H1 (cell line): ENCODE measurements at regions of chr20 and their contacts with region 1.

Region 1: GRCh38 chr20:4613718-4614620 is 107.7 kb upstream of the PRND start:
- DNase-seq: peak in 1 of 2 experiments; percentile 68
- H3K4me3 ChIP-seq: no peak overlapping the region
- H3K27ac ChIP-seq: no peak overlapping the region
- H3K4me1 ChIP-seq: no peaks in the 10 kb centered on the region; a peak in 2 of 7 replicates
- H3K27me3 ChIP-seq: no peaks in the 10 kb centered on the region
- CTCF ChIP-seq: peak in 2 of 3 experiments; percentile 55 to 70; a peak in 3 of 4 replicates
- EP300 ChIP-seq: no peak
- POLR2A ChIP-seq: no peak
- RAD21 ChIP-seq: peak; percentile 79 to 88

Region 2: DNA sequence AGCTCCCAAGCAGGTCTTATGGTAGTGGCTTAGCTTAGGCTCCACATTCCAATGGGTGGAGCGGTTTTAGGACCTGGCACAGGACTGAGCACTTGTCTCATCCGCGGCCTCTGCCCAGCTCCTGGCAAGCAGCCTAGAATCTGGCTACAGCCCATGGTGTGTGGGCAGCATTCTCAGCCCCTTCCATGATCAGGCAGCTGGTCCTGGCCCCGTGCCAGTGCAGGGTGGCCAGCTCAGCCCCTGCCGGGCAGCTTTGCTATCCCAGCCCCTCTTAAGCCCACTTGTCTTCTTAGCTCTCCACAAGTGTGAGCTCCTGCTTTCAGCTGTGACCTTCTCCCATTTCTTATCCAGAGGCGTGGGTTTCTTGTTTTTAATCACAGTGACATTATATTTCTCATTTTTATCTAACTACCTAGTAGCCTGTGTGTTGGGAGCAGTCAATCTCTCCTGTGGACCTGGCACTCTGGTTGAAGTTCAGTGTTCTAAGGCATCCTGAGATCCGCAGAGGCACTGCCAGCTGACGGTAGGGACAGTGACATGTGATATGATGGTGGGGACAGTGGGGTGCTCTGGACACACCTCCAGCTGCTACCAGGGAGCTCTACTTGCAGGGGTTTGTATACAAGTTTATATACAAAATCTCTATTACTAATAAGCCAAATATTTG is 12.2 kb before region 1 on chr20:
- CTCF ChIA-PET with region 1: interaction called, 11 read pairs
- POLR2A ChIA-PET with region 1: no interaction called
- DNase-seq: no peak
- H3K4me3 ChIP-seq: no peak overlapping the region
- H3K27ac ChIP-seq: no peak overlapping the region
- H3K4me1 ChIP-seq: no peaks in the 10 kb centered on the region
- H3K27me3 ChIP-seq: no peaks in the 10 kb centered on the region
- CTCF ChIP-seq: no peak
- EP300 ChIP-seq: no peak
- POLR2A ChIP-seq: no peak
- RAD21 ChIP-seq: no peak